T-cell (primary cell): ENCODE measurements at regions of chr10 and their contacts with region 1.

Region 1: DNA sequence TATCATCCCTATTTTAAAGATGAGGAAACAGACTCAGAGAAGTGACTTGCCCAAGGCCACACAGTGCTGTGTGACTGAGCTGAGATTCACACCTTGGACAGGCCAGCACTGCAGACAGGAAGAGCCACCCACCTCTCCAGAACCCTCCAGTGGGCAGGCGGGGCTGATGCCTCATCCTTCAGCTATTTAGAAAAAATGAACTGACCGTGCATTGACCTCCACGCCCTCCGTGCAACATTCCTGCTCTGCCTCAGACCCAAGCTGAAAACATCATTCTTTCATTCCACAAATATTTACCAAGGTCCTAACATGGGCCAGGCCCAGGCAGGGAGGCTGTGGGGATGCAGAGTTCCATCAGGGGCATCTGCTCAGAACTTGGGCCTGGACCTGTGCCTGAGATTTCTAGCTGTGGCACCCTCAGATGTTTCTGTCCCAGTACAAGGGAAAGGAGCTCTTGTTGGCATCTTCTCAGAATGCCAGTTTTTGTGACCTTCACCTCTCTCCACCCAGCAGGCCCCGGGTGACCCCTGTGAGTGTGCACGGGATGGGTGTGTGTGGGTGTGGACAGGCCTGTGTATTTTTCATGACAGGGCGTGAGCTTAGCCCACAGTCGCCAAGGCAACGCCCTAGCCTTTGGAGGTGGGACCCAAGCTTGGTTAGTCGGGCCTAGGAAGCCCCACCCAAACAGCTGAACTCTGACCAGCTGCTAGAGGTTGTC is 6.5 kb downstream of the VSIR start:
- DNase-seq: peak in 2 of 35 experiments; percentile 32 to 38
- ATAC-seq: no peak
- H3K4me3 ChIP-seq: peak overlapping the region in 1 of 2 donors; percentile 5
- H3K4me3 Mint-ChIP-seq: peak overlapping the region in 2 of 3 donors; percentile 61 to 97
- H3K27ac ChIP-seq: peak overlapping the region; percentile 82
- H3K27ac Mint-ChIP-seq: peak overlapping the region; percentile 97 to 98
- H3K4me1 ChIP-seq: peaks cover 45 to 97% of the 10 kb centered on the region in 2 experiments
- H3K4me1 Mint-ChIP-seq: peaks cover 92 to 96% (median 96%) of the 10 kb centered on the region in 3 donors
- H3K27me3 ChIP-seq: no peaks in the 10 kb centered on the region
- H3K27me3 Mint-ChIP-seq: no peaks in the 10 kb centered on the region

Region 2: GRCh38 chr10:71850637-71851464 is 84.0 kb after region 1 on chr10 and contains the start of gene PSAP:
- CTCF ChIA-PET with region 1: interaction called, 4 to 10 read pairs
- POLR2A ChIA-PET with region 1: no interaction called
- DNase-seq: peak; percentile 96 to 99 (median 98)
- ATAC-seq: peak; percentile 96 to 98 (median 97)
- H3K4me3 ChIP-seq: peak within 1 kb of the TSS; percentile 98 to 100
- H3K4me3 Mint-ChIP-seq: peak within 1 kb of the TSS; percentile 85 to 95 (median 93)
- H3K27ac ChIP-seq: peak within 1 kb of the TSS; percentile 59
- H3K27ac Mint-ChIP-seq: peak within 1 kb of the TSS; percentile 89 to 90
- H3K4me1 ChIP-seq: peaks cover 0 to 35% of the 10 kb centered on the region in 2 experiments
- H3K4me1 Mint-ChIP-seq: peaks cover 47 to 54% (median 48%) of the 10 kb centered on the region in 3 donors
- H3K27me3 ChIP-seq: no peaks in the 10 kb centered on the region
- H3K27me3 Mint-ChIP-seq: no peaks in the 10 kb centered on the region
- total RNA-seq, gene PSAP: 155 to 208 (median 190) TPM